ENCODE measurements at regions of chr20 and their contacts with region 1.

Region 1: GRCh38 chr20:44310664-44311639 is at the start of gene FITM2:
- DNase-seq: peak; percentile 100
- ATAC-seq: peak; percentile 86
- total RNA-seq, gene FITM2: 149 TPM

Region 2: DNA sequence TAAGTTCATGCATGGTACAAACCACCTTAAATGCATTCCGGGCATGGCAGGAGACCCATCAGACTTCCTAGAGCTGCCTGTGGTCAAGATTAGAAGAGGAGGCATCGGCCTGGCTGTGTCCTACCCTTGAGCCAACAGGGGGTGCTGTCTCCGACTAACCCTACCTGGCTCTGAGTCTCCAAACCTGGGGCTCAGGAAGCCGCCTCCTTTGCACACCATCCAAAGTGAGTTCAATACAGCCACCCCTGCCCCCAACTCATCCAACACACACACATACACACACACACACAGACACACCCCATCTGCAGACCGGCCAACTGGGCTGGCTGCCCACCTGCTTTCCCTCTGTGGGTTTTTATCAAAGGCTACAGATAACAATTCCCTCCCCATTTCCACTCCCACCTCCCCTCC is 201.0 kb before region 1 on chr20:
- intact Hi-C with region 1: loop called (anchors 10 kb)
- DNase-seq: no peak
- ATAC-seq: peak; percentile 9

Region 3: GRCh38 chr20:44217342-44218092 is 93.4 kb before region 1 on chr20:
- intact Hi-C with region 1: loop called (anchors 1 kb)
- DNase-seq: no peak
- ATAC-seq: peak; percentile 73

Region 4: GRCh38 chr20:44460795-44461141 is 149.8 kb after region 1 on chr20:
- intact Hi-C with region 1: loop called (anchors 10 kb)
- DNase-seq: no peak
- ATAC-seq: no peak